GM12878 (cell line): ENCODE measurements at regions of chr7 and their contacts with region 1.

Region 1: GRCh38 chr7:82210416-82211184 is 233.0 kb downstream of the CACNA2D1 start:
- DNase-seq: no peak
- ATAC-seq: peak; percentile 62
- H3K4me3 ChIP-seq: no peak overlapping the region
- H3K27ac ChIP-seq: no peak overlapping the region
- H3K4me1 ChIP-seq: no peaks in the 10 kb centered on the region
- H3K27me3 ChIP-seq: no peaks in the 10 kb centered on the region
- CTCF ChIP-seq: no peak
- EP300 ChIP-seq: no peak
- POLR2A ChIP-seq: no peak
- RAD21 ChIP-seq: no peak

Region 2: GRCh38 chr7:82152858-82153257 is 57.7 kb before region 1 on chr7:
- CTCF ChIA-PET with region 1: no interaction called
- POLR2A ChIA-PET with region 1: no interaction called
- RAD21 ChIA-PET with region 1: no interaction called
- SMC1A ChIA-PET with region 1: no interaction called
- in situ Hi-C with region 1: no loop called
- intact Hi-C with region 1: no loop called
- DNase-seq: no peak
- ATAC-seq: no peak; the same call in 2 of the 3 replicates
- H3K4me3 ChIP-seq: no peak overlapping the region
- H3K27ac ChIP-seq: no peak overlapping the region
- H3K4me1 ChIP-seq: no peaks in the 10 kb centered on the region
- H3K27me3 ChIP-seq: no peaks in the 10 kb centered on the region
- CTCF ChIP-seq: no peak
- EP300 ChIP-seq: no peak
- POLR2A ChIP-seq: no peak
- RAD21 ChIP-seq: no peak

Region 3: DNA sequence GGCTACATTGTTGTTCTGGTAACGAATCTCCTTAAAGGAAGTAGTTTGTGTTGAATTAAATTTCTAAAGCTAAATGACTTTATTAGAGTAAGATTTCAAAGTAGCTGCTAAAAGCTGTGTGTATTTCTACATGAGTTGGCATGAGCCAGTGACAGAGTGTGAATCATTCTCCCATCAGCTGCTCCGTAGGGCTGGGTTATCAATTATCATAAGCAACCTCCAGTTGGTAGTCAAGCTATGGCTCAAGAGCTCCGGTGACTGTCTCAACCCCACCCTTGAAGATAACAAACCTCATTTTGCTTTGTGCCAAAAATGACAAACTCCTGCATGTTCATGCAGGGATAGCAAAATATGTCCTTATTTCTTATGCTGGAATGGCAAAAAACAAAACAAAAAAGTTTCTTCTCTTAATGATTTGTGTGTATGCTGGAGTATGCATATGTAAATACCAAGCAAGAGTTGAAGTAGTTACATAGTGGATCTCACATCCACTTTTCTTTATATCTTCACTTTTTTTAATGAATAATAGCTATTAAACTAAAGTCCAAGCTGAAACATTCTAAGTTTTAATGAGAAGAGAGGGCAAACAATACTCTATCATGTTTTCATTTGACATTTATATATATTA is 16.5 kb before region 1 on chr7:
- CTCF ChIA-PET with region 1: interaction called, 7 read pairs
- POLR2A ChIA-PET with region 1: interaction called, 4 read pairs
- RAD21 ChIA-PET with region 1: interaction called, 3 read pairs
- SMC1A ChIA-PET with region 1: interaction called, 38 read pairs
- in situ Hi-C with region 1: no loop called
- intact Hi-C with region 1: no loop called
- DNase-seq: no peak
- ATAC-seq: peak; percentile 60
- H3K4me3 ChIP-seq: no peak overlapping the region
- H3K27ac ChIP-seq: no peak overlapping the region
- H3K4me1 ChIP-seq: no peaks in the 10 kb centered on the region
- H3K27me3 ChIP-seq: no peaks in the 10 kb centered on the region
- CTCF ChIP-seq: no peak
- EP300 ChIP-seq: no peak
- POLR2A ChIP-seq: no peak
- RAD21 ChIP-seq: no peak

Region 4: DNA sequence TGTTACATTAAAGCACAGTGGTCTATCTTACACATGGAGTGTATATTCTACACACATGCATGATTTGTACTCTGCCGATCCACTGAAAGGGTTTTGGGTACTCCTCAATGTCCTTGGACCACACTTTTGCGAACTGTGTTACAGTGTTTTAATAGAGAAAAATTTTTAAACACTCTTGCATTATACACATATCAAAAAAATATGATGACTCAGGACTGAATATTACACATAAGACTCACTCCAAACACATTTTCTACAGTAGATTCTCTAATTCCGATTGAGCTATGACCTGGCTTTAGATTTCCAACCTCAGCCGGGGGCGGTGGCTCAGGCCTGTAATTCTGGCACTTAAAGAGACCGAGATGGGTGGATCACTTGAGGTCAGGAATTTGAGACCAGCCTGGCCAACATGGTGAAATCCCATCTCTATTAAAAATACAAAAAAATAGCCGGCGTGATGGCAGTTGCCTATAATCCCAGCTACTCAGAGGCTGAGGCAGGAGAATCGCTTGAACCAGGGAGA is 10.6 kb after region 1 on chr7:
- CTCF ChIA-PET with region 1: interaction called, 6 read pairs
- POLR2A ChIA-PET with region 1: interaction called, 5 read pairs
- RAD21 ChIA-PET with region 1: interaction called, 5 read pairs
- SMC1A ChIA-PET with region 1: interaction called, 10 read pairs
- in situ Hi-C with region 1: no loop called
- intact Hi-C with region 1: no loop called
- DNase-seq: no peak
- ATAC-seq: no peak
- H3K4me3 ChIP-seq: no peak overlapping the region
- H3K27ac ChIP-seq: no peak overlapping the region
- H3K4me1 ChIP-seq: no peaks in the 10 kb centered on the region
- H3K27me3 ChIP-seq: no peaks in the 10 kb centered on the region
- CTCF ChIP-seq: no peak
- EP300 ChIP-seq: no peak
- POLR2A ChIP-seq: no peak
- RAD21 ChIP-seq: no peak